B cell (primary cell): ENCODE measurements at regions of chr17 and their contacts with region 1.

Region 1: DNA sequence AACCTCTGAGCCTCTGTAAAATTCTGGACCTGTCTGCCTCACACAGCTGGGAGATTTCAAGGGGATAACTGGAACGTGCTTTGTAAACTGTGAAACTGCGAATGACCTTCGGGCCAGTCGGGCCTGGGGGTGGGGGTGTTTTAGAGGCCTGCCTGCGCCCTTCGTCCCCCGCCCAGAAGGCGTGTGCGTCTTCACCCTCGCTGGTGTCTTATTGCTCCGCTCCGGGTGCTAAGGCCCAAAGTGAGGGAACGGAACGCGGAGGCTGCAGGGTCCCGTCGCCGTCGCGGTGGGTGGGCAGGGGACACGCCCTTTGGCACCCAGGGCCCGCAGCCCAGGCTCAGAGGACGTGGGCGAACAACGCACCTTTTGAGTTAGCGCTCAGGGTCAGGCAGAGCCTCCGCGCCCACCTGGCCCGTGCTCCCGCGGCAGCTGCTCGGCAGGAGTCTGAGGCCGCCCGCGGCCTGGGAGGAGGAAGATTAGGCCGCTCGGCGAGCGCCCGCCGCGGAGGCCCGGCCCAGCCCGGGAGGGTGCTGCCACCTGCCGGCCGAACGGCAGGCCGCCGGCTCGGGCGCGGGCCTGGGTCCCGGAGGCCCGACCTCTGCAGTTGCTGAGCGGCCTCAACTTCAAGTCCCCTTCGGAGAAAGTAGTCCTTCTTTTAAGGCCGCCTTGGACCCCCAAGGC is 29.7 kb downstream of the DCAKD start:
- DNase-seq: peak; percentile 82
- ATAC-seq: peak; percentile 84
- H3K4me3 ChIP-seq: peak overlapping the region in 4 of 5 experiments; percentile 28 to 53 (median 44)
- H3K4me3 Mint-ChIP-seq: peak overlapping the region; percentile 75
- H3K27ac ChIP-seq: no peak overlapping the region
- H3K27ac Mint-ChIP-seq: peak overlapping the region; percentile 60
- H3K4me1 ChIP-seq: peaks cover 27 to 28% of the 10 kb centered on the region in 2 donors
- H3K4me1 Mint-ChIP-seq: peaks cover 27% of the 10 kb centered on the region
- H3K27me3 ChIP-seq: peaks cover 0 to 43% (median 34%) of the 10 kb centered on the region in 4 experiments
- H3K27me3 Mint-ChIP-seq: peaks cover 33% of the 10 kb centered on the region
- CTCF ChIP-seq: peak; percentile 90

Region 2: DNA sequence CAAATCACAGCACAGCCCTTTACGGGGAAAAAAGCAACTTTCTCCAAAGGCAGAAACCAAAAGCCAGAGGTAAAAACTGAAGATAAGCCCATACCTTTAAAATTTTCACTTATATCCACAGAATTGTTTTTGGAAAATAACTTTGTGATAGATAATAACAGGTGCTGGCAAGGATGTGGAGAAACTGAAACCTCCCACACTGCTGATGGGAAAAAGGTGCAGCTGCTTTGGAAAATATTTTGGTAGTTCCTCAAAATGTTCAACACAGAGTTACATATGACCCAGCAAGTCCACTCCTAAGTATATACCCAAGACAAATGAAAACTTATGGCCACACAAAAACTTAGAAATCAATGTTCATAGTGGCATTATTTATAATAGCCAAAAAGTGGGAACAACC is 134.7 kb before region 1 on chr17:
- CTCF ChIA-PET with region 1: no interaction called
- POLR2A ChIA-PET with region 1: no interaction called
- intact Hi-C with region 1: no loop called
- DNase-seq: no peak
- ATAC-seq: no peak
- H3K4me3 ChIP-seq: no peak overlapping the region
- H3K4me3 Mint-ChIP-seq: no peak overlapping the region
- H3K27ac ChIP-seq: no peak overlapping the region
- H3K27ac Mint-ChIP-seq: no peak overlapping the region
- H3K4me1 ChIP-seq: peaks cover 14 to 17% of the 10 kb centered on the region in 2 donors
- H3K4me1 Mint-ChIP-seq: peaks cover 8% of the 10 kb centered on the region
- H3K27me3 ChIP-seq: no peaks in the 10 kb centered on the region
- H3K27me3 Mint-ChIP-seq: no peaks in the 10 kb centered on the region
- CTCF ChIP-seq: no peak

Region 3: DNA sequence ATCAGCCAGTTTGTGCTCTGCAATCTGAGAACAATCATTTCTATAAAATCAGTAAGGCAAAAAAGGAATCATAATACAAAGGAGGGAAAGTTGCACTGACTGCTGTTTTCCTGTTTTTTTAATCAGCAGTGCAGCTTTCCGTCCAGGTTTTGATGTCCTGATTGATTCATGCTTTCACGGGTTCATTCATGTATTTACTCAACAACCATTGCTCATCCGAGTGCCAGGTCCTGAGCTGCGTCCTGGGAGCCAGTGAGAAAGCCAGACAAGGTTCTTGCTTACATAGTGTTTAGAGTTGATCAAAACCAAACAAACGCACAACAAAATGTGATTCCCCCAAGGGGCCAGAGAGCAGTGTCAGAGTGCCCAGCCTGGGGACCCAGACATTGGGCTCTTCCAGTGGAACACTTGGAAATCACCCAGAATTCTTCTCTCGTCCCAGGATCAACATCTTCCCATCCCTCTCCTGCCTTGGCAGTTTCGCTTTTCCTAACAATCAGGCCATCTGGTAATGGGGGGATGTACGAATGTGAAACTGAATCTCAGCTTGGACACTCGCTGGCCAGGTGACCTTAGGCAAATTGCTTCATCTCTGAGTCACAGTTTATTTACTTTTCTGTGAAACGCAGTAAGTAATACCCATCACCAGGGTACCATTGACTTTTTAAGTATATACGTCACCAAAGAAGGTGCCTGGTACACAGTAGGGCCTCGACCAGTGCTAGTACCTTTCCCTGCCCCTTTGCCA is 40.4 kb before region 1 on chr17:
- CTCF ChIA-PET with region 1: interaction called, 3 read pairs
- POLR2A ChIA-PET with region 1: no interaction called
- intact Hi-C with region 1: loop called (anchors 1 kb)
- DNase-seq: no peak
- ATAC-seq: no peak
- H3K4me3 ChIP-seq: no peak overlapping the region
- H3K4me3 Mint-ChIP-seq: no peak overlapping the region
- H3K27ac ChIP-seq: no peak overlapping the region
- H3K27ac Mint-ChIP-seq: no peak overlapping the region
- H3K4me1 ChIP-seq: no peaks in the 10 kb centered on the region
- H3K4me1 Mint-ChIP-seq: no peaks in the 10 kb centered on the region
- H3K27me3 ChIP-seq: peaks cover 0 to 46% (median 9%) of the 10 kb centered on the region in 4 experiments
- H3K27me3 Mint-ChIP-seq: peaks cover 24% of the 10 kb centered on the region
- CTCF ChIP-seq: no peak

Region 4: DNA sequence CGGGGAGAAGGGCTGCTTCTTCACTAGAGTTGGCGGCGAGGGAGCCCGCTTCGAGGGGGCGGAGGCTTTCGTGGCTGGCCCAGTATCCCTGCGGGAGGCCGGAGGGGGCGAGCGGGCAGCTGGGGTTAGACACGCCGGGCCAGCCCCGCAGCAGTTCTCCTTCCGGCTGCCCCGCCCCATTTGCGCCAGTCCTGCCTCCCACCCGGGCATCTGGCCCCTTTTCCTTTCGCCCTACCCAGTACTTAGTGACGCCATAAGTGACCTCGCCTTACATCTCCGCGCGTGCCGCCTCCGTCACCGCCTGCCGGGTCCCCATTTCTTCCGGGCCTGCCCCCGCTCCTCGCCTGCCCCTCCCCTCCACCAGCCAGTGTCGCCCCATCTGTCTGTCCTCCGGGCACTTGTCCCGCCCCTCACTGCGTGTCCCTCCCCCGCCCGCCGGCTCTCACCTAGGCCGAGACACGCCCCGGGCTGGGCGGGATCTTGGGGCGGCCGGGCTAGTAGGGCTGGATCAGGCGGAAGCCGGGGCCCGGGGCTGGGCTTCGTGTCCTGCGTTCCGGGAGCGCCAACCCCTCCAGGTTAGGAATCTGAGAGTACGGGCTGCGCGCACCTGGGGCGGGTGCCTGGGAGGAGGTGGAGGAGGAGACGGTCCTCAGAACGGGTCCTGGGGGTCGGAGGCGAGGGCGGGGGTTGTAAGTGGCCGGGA is 225.8 kb after region 1 on chr17:
- CTCF ChIA-PET with region 1: no interaction called
- POLR2A ChIA-PET with region 1: no interaction called
- intact Hi-C with region 1: no loop called
- DNase-seq: peak; percentile 97
- ATAC-seq: peak; percentile 88
- H3K4me3 ChIP-seq: peak overlapping the region; percentile 2 to 81 (median 78)
- H3K4me3 Mint-ChIP-seq: peak overlapping the region; percentile 92
- H3K27ac ChIP-seq: peak overlapping the region; percentile 82 to 92
- H3K27ac Mint-ChIP-seq: peak overlapping the region; percentile 96
- H3K4me1 ChIP-seq: peaks cover 20 to 22% of the 10 kb centered on the region in 2 donors
- H3K4me1 Mint-ChIP-seq: peaks cover 34% of the 10 kb centered on the region
- H3K27me3 ChIP-seq: no peaks in the 10 kb centered on the region
- H3K27me3 Mint-ChIP-seq: no peaks in the 10 kb centered on the region
- CTCF ChIP-seq: no peak